Activated naive CD4-positive, alpha-beta T cell treated with anti-CD3 and anti-CD28 coated beads, Interleukin-2, amount 10 ng/mL, durations not matched to agents 7 days and 5 days (primary cell): ENCODE measurements at regions of chr16 and their contacts with region 1.

Region 1: DNA sequence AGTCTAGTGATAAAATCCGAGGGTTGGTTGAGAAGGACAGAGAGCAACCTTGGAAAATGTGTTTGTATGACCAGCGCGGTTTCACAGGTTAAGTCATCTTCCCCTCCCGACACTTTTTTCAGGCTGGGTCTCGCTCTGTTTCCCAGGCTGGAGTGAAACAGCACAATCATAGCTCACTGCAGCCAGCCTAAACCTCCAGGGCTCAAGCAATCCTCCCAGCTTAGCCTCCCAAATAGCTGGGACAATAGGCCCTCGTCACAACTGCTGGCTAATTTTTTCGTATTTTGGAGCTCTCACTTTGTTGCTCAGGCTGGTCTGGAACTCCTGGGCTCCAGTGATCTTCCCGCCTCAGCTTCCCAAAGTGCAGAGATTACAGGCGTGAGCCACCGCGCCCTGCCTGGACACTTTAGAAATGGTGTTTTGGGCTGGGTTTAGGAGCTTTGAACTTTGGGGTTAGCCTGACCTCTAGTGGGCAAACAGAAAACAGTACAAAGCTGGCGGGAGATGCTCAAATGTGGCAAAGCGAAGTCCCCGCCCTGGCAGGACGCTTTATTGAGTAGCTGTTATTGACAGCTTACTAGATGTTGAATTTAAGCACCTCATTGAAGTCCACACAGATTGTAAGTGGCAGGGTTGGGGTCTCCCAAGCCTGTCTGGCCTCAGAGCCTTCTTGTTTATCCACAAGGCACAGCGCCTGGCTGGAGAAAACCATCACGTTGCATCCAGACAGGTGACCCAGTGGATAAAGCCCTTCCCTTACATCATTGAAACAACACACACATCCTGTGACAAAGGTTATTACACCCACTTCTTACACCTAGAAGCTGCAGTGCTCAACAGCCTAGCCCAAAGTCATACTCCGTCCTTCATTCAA is 34.7 kb upstream of the RBBP6 start:
- DNase-seq: peak; percentile 67
- H3K4me3 Mint-ChIP-seq: no peak overlapping the region
- H3K27ac Mint-ChIP-seq: no peak overlapping the region
- H3K4me1 Mint-ChIP-seq: no peaks in the 10 kb centered on the region
- H3K27me3 Mint-ChIP-seq: peaks cover 61% of the 10 kb centered on the region

Region 2: DNA sequence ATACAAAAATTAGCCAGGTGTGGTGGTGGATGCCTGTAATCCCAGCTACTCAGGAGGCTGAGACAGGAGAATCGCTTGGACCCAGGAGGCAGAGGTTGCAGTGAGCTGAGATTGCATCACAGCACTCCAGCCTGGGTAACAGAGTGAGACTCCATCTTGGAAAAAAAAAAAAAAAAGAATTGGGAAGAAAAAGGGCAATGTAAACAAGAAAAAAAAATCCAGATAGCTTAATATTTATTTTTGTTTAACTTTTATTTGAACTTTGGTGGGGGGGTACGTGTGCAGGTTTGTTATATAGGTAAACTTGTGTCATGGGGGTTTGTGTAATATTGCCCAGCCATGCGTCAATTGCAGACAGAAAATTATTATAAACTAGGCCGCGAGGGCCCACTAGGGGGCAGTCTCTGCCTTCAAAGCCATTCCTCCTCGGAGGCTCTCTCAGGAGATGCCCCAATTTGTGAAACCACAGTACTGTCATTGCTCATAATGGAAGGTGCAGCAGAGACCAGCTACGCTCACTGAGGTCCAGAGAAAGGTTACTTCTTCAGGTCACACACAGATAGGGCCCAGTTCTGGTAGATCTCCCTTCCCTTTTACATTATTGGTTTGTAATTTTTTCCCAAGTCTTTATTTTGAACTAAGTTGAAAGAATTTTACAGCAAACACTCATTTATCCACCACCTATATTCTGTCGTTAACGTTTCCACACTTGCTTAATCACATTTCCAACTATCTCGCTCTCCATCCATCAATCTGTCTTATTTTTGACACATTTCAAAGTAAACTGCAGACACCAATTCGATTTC is 462.7 kb before region 1 on chr16:
- CTCF ChIA-PET with region 1: interaction called, 24 read pairs
- DNase-seq: peak; percentile 82
- H3K4me3 Mint-ChIP-seq: no peak overlapping the region
- H3K27ac Mint-ChIP-seq: no peak overlapping the region
- H3K4me1 Mint-ChIP-seq: peaks cover 3% of the 10 kb centered on the region
- H3K27me3 Mint-ChIP-seq: no peaks in the 10 kb centered on the region

Region 3: DNA sequence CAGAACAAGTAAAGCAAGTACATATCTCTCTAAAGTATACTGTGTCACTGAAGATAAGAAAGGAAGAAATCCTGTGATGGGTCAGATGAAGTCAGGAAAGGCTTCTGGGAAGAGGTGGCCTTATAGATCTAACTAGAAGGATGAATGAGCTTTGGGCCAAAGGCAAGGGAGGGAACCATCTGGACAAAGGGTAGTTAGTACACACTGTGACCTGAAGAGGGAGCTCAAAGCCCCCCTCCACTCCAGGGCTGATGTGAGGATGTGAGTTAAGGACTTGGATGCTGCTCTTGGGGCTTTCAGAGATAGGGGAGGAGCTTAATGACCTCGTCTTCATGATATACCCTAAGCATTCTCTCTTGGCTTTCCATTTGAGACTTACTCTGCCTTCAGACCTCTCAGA is 433.9 kb before region 1 on chr16:
- CTCF ChIA-PET with region 1: interaction called, 13 read pairs
- DNase-seq: peak; percentile 32
- H3K4me3 Mint-ChIP-seq: no peak overlapping the region
- H3K27ac Mint-ChIP-seq: no peak overlapping the region
- H3K4me1 Mint-ChIP-seq: peaks cover 13% of the 10 kb centered on the region
- H3K27me3 Mint-ChIP-seq: no peaks in the 10 kb centered on the region

Region 4: GRCh38 chr16:24198807-24199533 is 305.7 kb before region 1 on chr16:
- CTCF ChIA-PET with region 1: no interaction called
- DNase-seq: no peak
- H3K4me3 Mint-ChIP-seq: no peak overlapping the region
- H3K27ac Mint-ChIP-seq: no peak overlapping the region
- H3K4me1 Mint-ChIP-seq: no peaks in the 10 kb centered on the region
- H3K27me3 Mint-ChIP-seq: no peaks in the 10 kb centered on the region

Region 5: GRCh38 chr16:24253192-24253591 is 251.5 kb before region 1 on chr16:
- CTCF ChIA-PET with region 1: interaction called, 13 read pairs
- DNase-seq: peak; percentile 40
- H3K4me3 Mint-ChIP-seq: no peak overlapping the region
- H3K27ac Mint-ChIP-seq: no peak overlapping the region
- H3K4me1 Mint-ChIP-seq: peaks cover 2% of the 10 kb centered on the region
- H3K27me3 Mint-ChIP-seq: peaks cover 31% of the 10 kb centered on the region

Region 6: GRCh38 chr16:24515186-24515585 is 10.5 kb after region 1 on chr16:
- CTCF ChIA-PET with region 1: interaction called, 12 read pairs
- DNase-seq: no peak
- H3K4me3 Mint-ChIP-seq: no peak overlapping the region
- H3K27ac Mint-ChIP-seq: no peak overlapping the region
- H3K4me1 Mint-ChIP-seq: peaks cover 4% of the 10 kb centered on the region
- H3K27me3 Mint-ChIP-seq: peaks cover 23% of the 10 kb centered on the region